ENCODE measurements at regions of chr6 and their contacts with region 1.

Region 1: GRCh38 chr6:139134817-139135581 is at the start of gene HECA:
- DNase-seq: peak; percentile 96
- H3K4me3 Mint-ChIP-seq: peak within 1 kb of the TSS; percentile 81
- H3K27ac Mint-ChIP-seq: peak within 1 kb of the TSS; percentile 85
- H3K4me1 Mint-ChIP-seq: peaks cover 60% of the 10 kb centered on the region
- H3K27me3 Mint-ChIP-seq: no peaks in the 10 kb centered on the region
- total RNA-seq, gene HECA: 33.6 and 36.9 TPM in 2 replicates

Region 2: GRCh38 chr6:138765896-138766655 is 368.9 kb before region 1 on chr6:
- intact Hi-C with region 1: no loop called
- DNase-seq: no peak
- H3K4me3 Mint-ChIP-seq: no peak overlapping the region
- H3K27ac Mint-ChIP-seq: no peak overlapping the region
- H3K4me1 Mint-ChIP-seq: peaks cover 5% of the 10 kb centered on the region
- H3K27me3 Mint-ChIP-seq: no peaks in the 10 kb centered on the region

Region 3: GRCh38 chr6:139146317-139146726 is 11.3 kb after region 1 on chr6:
- intact Hi-C with region 1: loop called (anchors 1 kb)
- DNase-seq: no peak
- H3K4me3 Mint-ChIP-seq: peak overlapping the region; percentile 56
- H3K27ac Mint-ChIP-seq: peak overlapping the region; percentile 87
- H3K4me1 Mint-ChIP-seq: peaks cover 84% of the 10 kb centered on the region
- H3K27me3 Mint-ChIP-seq: no peaks in the 10 kb centered on the region

Region 4: GRCh38 chr6:139173172-139173571 is 38.2 kb after region 1 on chr6:
- intact Hi-C with region 1: loop called (anchors 2 kb)
- DNase-seq: no peak
- H3K4me3 Mint-ChIP-seq: no peak overlapping the region
- H3K27ac Mint-ChIP-seq: peak overlapping the region; percentile 70
- H3K4me1 Mint-ChIP-seq: peaks cover 73% of the 10 kb centered on the region
- H3K27me3 Mint-ChIP-seq: no peaks in the 10 kb centered on the region

Measured in activated T-helper 2 cell treated with anti-CD3 and anti-CD28 coated beads, Interferon-gamma antibody, Interleukin-2, Interleukin-4, amounts not matched to agents 10 μg/mL and 5 μg/mL and 100 μg/mL, durations not matched to agents 14 hours and 24 hours and 36 hours (primary cell).